ENCODE measurements at regions of chr1 and their contacts with region 1.

Region 1: DNA sequence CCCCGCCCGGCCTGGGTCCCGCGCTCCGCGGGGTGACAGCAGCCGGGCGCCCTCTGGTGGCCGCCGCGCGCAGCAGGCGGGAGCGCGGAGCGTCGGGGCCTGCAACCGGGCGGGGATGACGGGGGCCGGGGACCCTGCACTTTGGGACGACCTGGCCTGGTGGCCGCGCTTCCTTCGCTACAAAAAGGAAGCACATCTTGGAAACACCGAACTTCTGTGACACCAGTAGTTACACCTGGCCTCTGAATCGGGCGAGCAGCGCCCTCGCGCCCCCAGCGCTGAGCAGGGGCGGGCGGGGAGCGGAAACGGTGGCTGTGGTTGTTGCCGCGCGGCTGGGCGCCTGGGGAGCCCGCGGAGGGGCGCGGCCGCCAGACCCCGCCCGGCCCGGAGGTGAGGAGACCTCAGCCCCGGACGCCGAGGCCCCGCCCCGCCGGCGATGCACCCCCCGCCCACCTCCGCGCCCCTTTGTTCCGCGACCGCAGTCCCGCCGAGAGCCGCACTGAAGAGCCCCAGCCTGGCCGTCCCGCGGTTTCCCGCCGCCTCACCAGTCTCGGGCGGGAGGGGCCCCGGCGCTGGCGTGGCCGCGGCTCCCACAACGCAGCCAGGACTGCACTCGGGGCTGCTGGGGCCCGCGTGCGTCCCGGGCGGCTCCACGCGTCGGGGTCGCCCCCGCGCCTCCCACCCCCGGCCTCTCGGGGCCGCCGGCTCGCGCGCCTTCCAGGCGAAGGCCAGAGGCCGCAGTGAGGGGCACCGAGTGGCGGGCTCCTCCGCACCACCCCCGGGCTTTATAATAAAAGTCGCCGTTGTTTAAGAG is 59.3 kb downstream of the H3-3A start:
- DNase-seq: peak; percentile 86
- ATAC-seq: peak; percentile 79
- H3K4me3 Mint-ChIP-seq: peak overlapping the region; percentile 68
- H3K27ac Mint-ChIP-seq: peak overlapping the region; percentile 60
- H3K4me1 Mint-ChIP-seq: peaks cover 20% of the 10 kb centered on the region
- H3K27me3 Mint-ChIP-seq: no peaks in the 10 kb centered on the region

Region 2: DNA sequence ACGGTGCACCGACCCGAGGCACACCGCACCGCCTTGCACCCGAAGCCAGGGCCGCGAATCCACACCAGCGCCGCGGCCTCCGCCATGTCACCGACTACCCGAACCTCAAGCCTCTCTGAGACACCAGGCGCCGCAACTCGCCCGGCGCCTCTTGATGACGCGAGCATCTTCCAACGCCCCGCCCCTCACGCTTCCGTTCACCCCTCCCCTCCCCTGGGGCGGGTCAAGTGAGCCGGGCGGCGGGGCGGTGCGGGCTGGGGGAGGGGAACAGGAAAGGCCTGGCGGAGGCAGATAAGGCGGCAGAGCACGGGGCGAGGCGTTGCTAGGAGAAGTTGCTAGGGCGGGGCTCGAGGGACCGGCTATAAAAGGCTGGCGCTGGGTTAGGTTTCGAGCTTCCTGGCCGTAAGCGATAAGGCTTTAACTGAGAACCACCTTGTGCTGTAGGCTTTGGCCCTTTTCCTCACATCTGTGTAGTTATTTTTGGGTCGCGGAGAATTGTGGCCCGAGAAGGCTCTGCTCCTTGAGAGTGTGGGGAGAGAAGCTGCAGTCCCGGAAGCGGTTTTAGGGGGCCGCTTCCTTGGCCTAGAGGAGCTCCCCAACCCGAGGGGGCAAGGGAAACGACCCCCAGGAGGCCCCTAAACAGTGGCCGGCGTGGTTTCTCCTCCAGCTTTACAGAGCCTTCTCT is 122.4 kb before region 1 on chr1 and contains the start of gene SDE2:
- CTCF ChIA-PET with region 1: interaction called, 6 read pairs
- POLR2A ChIA-PET with region 1: no interaction called
- intact Hi-C with region 1: loop called (anchors 1 to 5 kb)
- DNase-seq: peak; percentile 100
- ATAC-seq: peak; percentile 90
- H3K4me3 Mint-ChIP-seq: peak within 1 kb of the TSS; percentile 89
- H3K27ac Mint-ChIP-seq: peak within 1 kb of the TSS; percentile 100
- H3K4me1 Mint-ChIP-seq: peaks cover 69% of the 10 kb centered on the region
- H3K27me3 Mint-ChIP-seq: no peaks in the 10 kb centered on the region
- total RNA-seq, gene SDE2: 13.5 to 15.0 TPM

Region 3: DNA sequence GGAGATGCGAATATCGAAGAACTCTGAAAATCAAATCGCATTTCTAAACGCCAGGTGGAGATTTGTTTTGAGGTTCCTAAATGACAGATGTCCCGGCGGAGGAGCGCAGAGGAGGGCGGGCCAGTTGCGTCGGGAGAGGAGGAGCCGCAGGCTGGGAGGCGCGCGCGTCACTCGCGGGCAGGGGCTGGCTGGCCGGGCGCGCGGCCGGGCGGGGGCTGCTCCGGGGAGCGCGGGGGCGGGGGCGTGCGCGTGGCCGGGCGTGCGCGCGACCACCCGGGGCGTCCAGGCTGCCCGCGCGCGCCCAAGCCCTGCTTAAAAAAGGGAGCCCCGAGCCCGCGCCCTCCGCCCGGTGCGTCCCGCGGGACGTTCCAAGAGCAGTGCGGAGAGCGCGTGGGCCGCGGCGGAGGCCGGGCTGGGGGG is 12.0 kb before region 1 on chr1:
- CTCF ChIA-PET with region 1: interaction called, 16 read pairs
- POLR2A ChIA-PET with region 1: interaction called, 3 read pairs
- intact Hi-C with region 1: loop called in 1 of 2 experiments (anchors 1 kb)
- DNase-seq: peak; percentile 90
- ATAC-seq: peak; percentile 90
- H3K4me3 Mint-ChIP-seq: peak overlapping the region; percentile 81
- H3K27ac Mint-ChIP-seq: peak overlapping the region; percentile 59
- H3K4me1 Mint-ChIP-seq: peaks cover 9% of the 10 kb centered on the region
- H3K27me3 Mint-ChIP-seq: no peaks in the 10 kb centered on the region

Region 4: GRCh38 chr1:226195144-226195543 is 73.3 kb after region 1 on chr1:
- CTCF ChIA-PET with region 1: interaction called, 67 read pairs
- POLR2A ChIA-PET with region 1: interaction called, 3 read pairs
- intact Hi-C with region 1: loop called (anchors 1 kb)
- DNase-seq: no peak
- ATAC-seq: no peak
- H3K4me3 Mint-ChIP-seq: no peak overlapping the region
- H3K27ac Mint-ChIP-seq: no peak overlapping the region
- H3K4me1 Mint-ChIP-seq: no peaks in the 10 kb centered on the region
- H3K27me3 Mint-ChIP-seq: no peaks in the 10 kb centered on the region

Region 5: DNA sequence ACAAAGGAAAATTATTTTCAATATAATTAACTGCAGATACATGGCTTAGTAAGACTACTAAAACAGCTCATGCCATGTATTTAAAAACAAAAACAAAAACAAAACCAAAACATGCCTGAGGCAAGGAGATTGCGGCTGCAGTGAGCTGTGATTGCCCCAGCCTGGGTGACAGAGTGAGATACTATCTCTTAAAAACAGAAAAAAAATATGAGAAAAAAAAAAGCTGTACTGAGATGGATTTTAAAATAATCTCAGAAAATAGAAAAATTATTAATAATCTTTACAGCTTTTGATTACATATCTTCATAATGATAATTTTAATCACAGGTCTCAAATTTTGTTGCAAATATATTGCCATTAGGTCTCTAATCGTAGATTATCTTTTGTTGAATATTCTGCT is 211.2 kb after region 1 on chr1:
- CTCF ChIA-PET with region 1: interaction called, 35 read pairs
- POLR2A ChIA-PET with region 1: interaction called, 3 read pairs
- intact Hi-C with region 1: loop called (anchors 1 kb)
- DNase-seq: no peak
- ATAC-seq: no peak
- H3K4me3 Mint-ChIP-seq: peak overlapping the region; percentile 17
- H3K27ac Mint-ChIP-seq: no peak overlapping the region
- H3K4me1 Mint-ChIP-seq: peaks cover 13% of the 10 kb centered on the region
- H3K27me3 Mint-ChIP-seq: no peaks in the 10 kb centered on the region

Measured in activated CD4-positive, alpha-beta T cell treated with anti-CD3 and anti-CD28 coated beads for 36 hours (primary cell).